AG04450 (cell line): ENCODE measurements at regions of chr11 and their contacts with region 1.

Region 1: GRCh38 chr11:35822815-35823495 is 120.9 kb upstream of the LDLRAD3 start:
- DNase-seq: no peak
- H3K4me3 ChIP-seq: no peak overlapping the region
- H3K27ac ChIP-seq: no peak overlapping the region
- H3K27me3 ChIP-seq: no peaks in the 10 kb centered on the region
- CTCF ChIP-seq: no peak

Region 2: GRCh38 chr11:35021589-35021988 is 801.4 kb before region 1 on chr11:
- CTCF ChIA-PET with region 1: no interaction called
- POLR2A ChIA-PET with region 1: no interaction called
- DNase-seq: no peak
- H3K4me3 ChIP-seq: no peak overlapping the region
- H3K27ac ChIP-seq: no peak overlapping the region
- H3K27me3 ChIP-seq: no peaks in the 10 kb centered on the region
- CTCF ChIP-seq: no peak

Region 3: DNA sequence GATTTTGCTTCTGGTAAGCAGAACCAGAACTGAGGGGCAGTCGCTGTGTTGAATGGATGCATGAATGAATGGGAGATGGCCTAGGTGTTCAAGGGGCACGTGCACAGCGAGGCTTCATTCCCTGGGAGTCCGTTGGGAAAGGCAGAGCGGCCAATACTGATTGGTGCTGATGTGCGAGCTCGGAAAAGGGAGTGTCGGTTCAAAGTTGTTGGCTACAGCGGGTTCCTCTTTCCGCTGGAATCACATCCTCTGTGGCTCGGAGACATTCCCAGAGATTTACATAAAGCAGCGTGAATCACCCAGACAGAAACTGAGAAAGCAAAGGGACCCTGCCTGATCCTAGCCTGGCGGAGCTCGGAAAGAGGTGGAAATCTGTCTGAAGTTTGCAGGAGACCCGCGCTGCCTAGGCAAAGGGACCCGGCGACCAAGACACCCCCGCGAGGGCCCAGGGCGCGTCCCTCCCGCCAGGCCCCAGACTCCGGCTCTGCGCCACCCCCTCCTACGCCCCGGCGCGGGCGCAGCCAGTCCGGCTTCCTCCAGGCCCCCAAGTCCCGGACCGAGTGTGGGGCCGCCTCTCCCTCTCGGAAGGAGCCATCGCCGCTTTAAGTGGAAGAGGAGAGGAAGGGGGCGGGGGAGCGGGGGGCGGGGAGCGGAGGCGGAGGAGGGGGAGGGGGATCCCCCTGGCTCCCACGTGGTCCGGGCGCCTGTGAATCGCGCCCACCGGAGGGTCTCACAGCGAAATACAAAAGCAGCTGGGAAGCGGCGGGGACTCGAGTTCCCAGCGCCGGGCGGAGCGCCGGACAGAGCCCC is 205.1 kb before region 1 on chr11 and contains the start of gene FJX1:
- CTCF ChIA-PET with region 1: interaction called, 40 read pairs
- POLR2A ChIA-PET with region 1: interaction called, 3 read pairs
- DNase-seq: peak; percentile 72
- H3K4me3 ChIP-seq: peak within 1 kb of the TSS; percentile 78
- H3K27ac ChIP-seq: peak within 1 kb of the TSS; percentile 80
- H3K27me3 ChIP-seq: no peaks in the 10 kb centered on the region
- CTCF ChIP-seq: no peak
- polyA plus RNA-seq, gene FJX1: 4.8 and 5.6 TPM in 2 replicates

Region 4: DNA sequence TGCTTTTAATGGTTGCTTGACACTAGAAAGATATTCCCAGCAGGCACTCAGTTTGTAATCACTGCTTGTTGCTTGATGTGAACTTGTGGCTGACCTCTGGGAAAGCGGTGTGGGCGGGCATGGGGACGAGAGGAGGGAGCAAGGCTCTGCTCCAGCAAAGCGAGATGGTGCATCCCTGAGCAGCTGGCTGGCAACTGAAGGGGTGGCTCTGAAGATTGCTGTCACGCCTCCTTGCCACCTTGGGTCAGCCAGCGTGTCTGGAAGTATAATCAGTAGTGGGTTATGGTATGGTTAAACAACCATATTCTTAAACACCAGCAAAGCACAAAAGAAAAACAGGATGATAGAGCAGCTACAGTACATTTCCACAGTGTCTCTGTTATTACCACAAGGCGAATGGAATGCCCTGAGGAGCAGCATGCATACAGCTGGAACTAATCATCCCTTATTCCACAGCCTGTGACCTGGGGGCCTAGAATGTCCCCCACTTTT is 35.9 kb before region 1 on chr11:
- CTCF ChIA-PET with region 1: interaction called, 18 read pairs
- POLR2A ChIA-PET with region 1: no interaction called
- DNase-seq: peak; percentile 18
- H3K4me3 ChIP-seq: no peak overlapping the region
- H3K27ac ChIP-seq: peak overlapping the region; percentile 85
- H3K27me3 ChIP-seq: no peaks in the 10 kb centered on the region
- CTCF ChIP-seq: no peak

Region 5: GRCh38 chr11:35873721-35874120 is 50.8 kb after region 1 on chr11:
- CTCF ChIA-PET with region 1: interaction called, 18 read pairs
- POLR2A ChIA-PET with region 1: interaction called, 3 read pairs
- DNase-seq: no peak
- H3K4me3 ChIP-seq: no peak overlapping the region
- H3K27ac ChIP-seq: no peak overlapping the region
- H3K27me3 ChIP-seq: peaks cover 20% of the 10 kb centered on the region
- CTCF ChIP-seq: no peak

Region 6: DNA sequence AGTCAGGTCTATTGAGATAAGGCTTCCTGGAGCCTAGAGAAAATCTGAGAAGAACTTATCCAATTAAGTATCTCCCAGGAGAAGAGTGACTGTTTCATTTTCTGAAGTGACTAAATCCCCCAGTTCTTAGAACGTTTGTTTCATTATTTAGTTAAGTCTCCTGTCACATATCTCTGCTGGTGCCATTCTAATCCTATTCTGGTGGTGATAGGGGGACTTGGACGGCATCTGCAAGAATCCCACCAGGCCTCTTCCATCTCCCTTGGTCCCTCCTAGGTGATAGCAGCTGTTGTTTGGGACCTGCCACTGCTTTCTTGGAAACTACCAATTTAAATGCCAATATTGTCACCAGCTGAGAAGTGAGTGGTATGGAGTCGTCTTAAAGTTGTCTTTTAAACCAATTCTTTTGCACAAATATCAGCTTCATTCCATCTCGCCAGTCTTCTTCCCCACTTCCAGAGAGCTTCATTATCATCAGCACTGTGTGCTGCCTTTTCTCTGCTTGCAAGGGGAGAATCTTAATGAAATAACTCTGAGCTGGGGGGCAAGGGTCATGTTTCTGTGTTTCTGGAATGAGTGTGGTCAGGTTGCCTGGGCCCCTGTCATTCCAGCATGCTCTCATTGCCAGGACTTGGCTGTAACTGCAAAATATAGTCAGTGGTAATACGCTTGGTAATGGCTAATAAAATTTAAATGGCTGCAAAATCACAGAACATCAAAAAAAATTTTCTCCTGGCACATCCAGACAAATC is 225.7 kb after region 1 on chr11:
- CTCF ChIA-PET with region 1: interaction called, 37 read pairs
- POLR2A ChIA-PET with region 1: no interaction called
- DNase-seq: no peak
- H3K4me3 ChIP-seq: no peak overlapping the region
- H3K27ac ChIP-seq: no peak overlapping the region
- H3K27me3 ChIP-seq: no peaks in the 10 kb centered on the region
- CTCF ChIP-seq: no peak

Region 7: DNA sequence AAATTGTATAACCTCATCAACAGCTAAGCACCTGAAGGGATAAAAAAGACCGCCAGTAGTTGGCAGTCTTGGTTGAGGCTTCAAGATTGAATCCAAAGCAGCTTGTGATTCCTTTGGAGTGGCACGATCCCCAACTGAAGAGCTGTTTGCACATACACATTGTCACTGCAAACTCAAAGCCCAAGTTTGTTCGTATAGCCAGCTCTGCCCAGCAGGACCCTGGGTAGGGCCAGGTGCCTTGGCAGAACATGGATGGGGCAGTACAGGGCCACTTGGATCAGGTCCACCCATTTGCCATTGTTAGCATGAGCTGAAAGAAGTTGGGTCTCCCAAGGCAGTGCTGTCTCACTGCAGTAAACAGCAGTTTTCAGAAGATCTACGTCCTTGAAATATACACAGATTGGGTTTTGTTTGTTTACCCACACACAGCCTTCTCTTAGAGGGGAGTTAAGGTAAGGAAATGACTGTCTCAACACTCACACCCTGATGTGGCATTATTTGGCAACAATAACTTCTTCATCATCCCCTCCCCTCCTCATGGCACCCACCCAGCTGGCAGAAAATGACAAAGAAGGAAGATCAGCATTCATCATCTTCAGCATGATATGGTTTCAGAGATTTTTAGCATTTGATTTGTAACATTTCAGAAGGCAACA is 333.3 kb after region 1 on chr11:
- CTCF ChIA-PET with region 1: interaction called, 33 read pairs
- POLR2A ChIA-PET with region 1: no interaction called
- DNase-seq: no peak
- H3K4me3 ChIP-seq: no peak overlapping the region
- H3K27ac ChIP-seq: no peak overlapping the region
- H3K27me3 ChIP-seq: no peaks in the 10 kb centered on the region
- CTCF ChIP-seq: no peak

Region 8: DNA sequence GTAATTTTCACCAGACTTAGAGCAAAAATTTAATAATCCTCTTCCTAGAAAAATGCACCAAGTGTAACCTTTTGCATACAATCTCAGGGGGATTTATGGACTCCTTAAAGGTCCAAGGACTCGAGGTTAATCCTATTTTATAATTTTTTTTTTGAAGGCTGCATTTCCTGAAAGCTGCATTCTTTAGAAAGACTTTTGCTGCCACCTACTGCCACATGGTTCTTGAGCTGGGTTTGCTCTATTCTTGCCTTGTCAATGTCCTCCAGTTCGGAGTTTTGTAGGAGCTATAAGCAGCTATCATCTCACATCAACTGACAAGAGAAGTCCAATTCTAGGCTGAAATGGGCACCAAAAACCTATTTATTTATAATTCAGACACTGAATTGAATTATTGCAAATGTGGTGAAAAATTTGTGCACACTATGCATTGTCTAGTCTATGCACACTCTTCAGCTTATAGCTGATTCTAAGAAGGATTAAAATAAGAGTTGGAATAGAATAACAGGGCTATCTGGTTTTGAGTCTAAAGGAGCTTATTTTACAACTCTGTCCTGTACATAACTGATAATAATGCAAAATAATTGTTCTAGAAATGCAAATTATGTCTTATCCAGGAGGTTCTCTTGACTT is 655.9 kb after region 1 on chr11:
- CTCF ChIA-PET with region 1: interaction called, 15 read pairs
- POLR2A ChIA-PET with region 1: no interaction called
- DNase-seq: no peak
- H3K4me3 ChIP-seq: no peak overlapping the region
- H3K27ac ChIP-seq: no peak overlapping the region
- H3K27me3 ChIP-seq: no peaks in the 10 kb centered on the region
- CTCF ChIP-seq: peak; percentile 77